ENCODE measurements at regions of chr17 and their contacts with region 1.

Region 1: GRCh38 chr17:15260376-15261257 is 4.5 kb downstream of the PMP22 start:
- DNase-seq: peak; percentile 97
- H3K4me3 ChIP-seq: peak overlapping the region; percentile 72 to 81 (median 76)
- H3K27ac ChIP-seq: peak overlapping the region; percentile 94 to 99 (median 97)
- H3K4me1 ChIP-seq: peaks cover 44 to 62% (median 60%) of the 10 kb centered on the region in 4 donors
- H3K27me3 ChIP-seq: no peaks in the 10 kb centered on the region
- CTCF ChIP-seq: peak; percentile 79 to 92 (median 88)
- EP300 ChIP-seq: no peak
- POLR2A ChIP-seq: peak; percentile 31

Region 2: DNA sequence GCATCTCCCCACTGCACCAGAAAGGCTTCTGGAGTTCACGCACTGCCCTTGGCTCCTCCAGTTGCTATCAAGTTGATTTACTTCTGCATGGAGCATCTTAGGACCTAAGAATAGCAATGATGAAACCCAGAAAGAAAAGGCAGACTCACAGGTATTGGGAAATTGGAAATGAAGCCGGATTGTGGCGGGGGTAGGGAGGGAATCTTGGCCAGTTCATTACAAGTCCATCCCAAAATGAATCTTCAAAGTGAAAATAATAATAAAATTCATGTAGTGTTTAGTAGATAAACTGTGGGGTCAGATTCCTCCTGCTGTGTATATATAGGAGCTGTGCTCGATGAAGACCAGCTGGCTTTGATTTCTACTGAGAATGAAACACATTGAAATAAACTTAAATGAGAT is 47.1 kb after region 1 on chr17:
- intact Hi-C with region 1: no loop called
- DNase-seq: no peak
- H3K4me3 ChIP-seq: no peak overlapping the region
- H3K27ac ChIP-seq: peak overlapping the region in 1 of 4 donors; percentile 16
- H3K4me1 ChIP-seq: peaks cover 0 to 23% (median 7%) of the 10 kb centered on the region in 4 donors
- H3K27me3 ChIP-seq: no peaks in the 10 kb centered on the region
- CTCF ChIP-seq: no peak
- EP300 ChIP-seq: no peak
- POLR2A ChIP-seq: no peak

Region 3: GRCh38 chr17:15341385-15341849 is 80.8 kb after region 1 on chr17 and contains the start of gene TEKT3:
- intact Hi-C with region 1: loop called (anchors 5 kb)
- DNase-seq: peak; percentile 94
- H3K4me3 ChIP-seq: peak within 1 kb of the TSS; percentile 55 to 66 (median 59)
- H3K27ac ChIP-seq: peak within 1 kb of the TSS in 1 of 4 donors; percentile 16
- H3K4me1 ChIP-seq: peaks cover 5 to 19% (median 14%) of the 10 kb centered on the region in 4 donors
- H3K27me3 ChIP-seq: peaks cover 0 to 43% (median 0%) of the 10 kb centered on the region in 4 donors
- CTCF ChIP-seq: no peak
- EP300 ChIP-seq: no peak
- POLR2A ChIP-seq: no peak
- total RNA-seq, gene TEKT3: not detected

Region 4: GRCh38 chr17:15456972-15457722 is 196.5 kb after region 1 on chr17:
- intact Hi-C with region 1: loop called (anchors 2 kb)
- DNase-seq: no peak
- H3K4me3 ChIP-seq: peak overlapping the region; percentile 4 to 34 (median 14)
- H3K27ac ChIP-seq: peak overlapping the region; percentile 67 to 79 (median 76)
- H3K4me1 ChIP-seq: peaks cover 24 to 82% (median 78%) of the 10 kb centered on the region in 4 donors
- H3K27me3 ChIP-seq: no peaks in the 10 kb centered on the region
- CTCF ChIP-seq: peak; percentile 41 to 50 (median 42)
- EP300 ChIP-seq: no peak
- POLR2A ChIP-seq: no peak

Region 5: GRCh38 chr17:15502369-15503112 is 241.9 kb after region 1 on chr17:
- intact Hi-C with region 1: loop called (anchors 1 kb)
- DNase-seq: peak; percentile 97
- H3K4me3 ChIP-seq: peak overlapping the region; percentile 42 to 56 (median 44)
- H3K27ac ChIP-seq: peak overlapping the region; percentile 71 to 85 (median 83)
- H3K4me1 ChIP-seq: peaks cover 18 to 23% (median 19%) of the 10 kb centered on the region in 4 donors
- H3K27me3 ChIP-seq: no peaks in the 10 kb centered on the region
- CTCF ChIP-seq: peak; percentile 88 to 91 (median 89)
- EP300 ChIP-seq: no peak
- POLR2A ChIP-seq: peak; percentile 16

Measured in esophagus muscularis mucosa (tissue), 4 donors.